Activated CD4-positive, alpha-beta memory T cell treated with anti-CD3 and anti-CD28 coated beads, Interleukin-2, amount 10 ng/mL, durations not matched to agents 7 days and 5 days (primary cell): ENCODE measurements at regions of chrX and their contacts with region 1.

Region 1: GRCh38 chrX:100674705-100675104 is 30.7 kb downstream of the SRPX2 start:
- DNase-seq: no peak
- H3K4me3 Mint-ChIP-seq: no peak overlapping the region
- H3K27ac Mint-ChIP-seq: no peak overlapping the region
- H3K4me1 Mint-ChIP-seq: peaks cover 7% of the 10 kb centered on the region
- H3K27me3 Mint-ChIP-seq: no peaks in the 10 kb centered on the region

Region 2: GRCh38 chrX:100409610-100410590 is 264.8 kb before region 1 on chrX and contains the start of gene PCDH19:
- CTCF ChIA-PET with region 1: no interaction called
- POLR2A ChIA-PET with region 1: no interaction called
- DNase-seq: peak; percentile 19
- H3K4me3 Mint-ChIP-seq: peak within 1 kb of the TSS; percentile 27
- H3K27ac Mint-ChIP-seq: no peak within 1 kb of the TSS
- H3K4me1 Mint-ChIP-seq: peaks cover 3% of the 10 kb centered on the region
- H3K27me3 Mint-ChIP-seq: peaks cover 61% of the 10 kb centered on the region
- total RNA-seq, gene PCDH19: not detected

Region 3: DNA sequence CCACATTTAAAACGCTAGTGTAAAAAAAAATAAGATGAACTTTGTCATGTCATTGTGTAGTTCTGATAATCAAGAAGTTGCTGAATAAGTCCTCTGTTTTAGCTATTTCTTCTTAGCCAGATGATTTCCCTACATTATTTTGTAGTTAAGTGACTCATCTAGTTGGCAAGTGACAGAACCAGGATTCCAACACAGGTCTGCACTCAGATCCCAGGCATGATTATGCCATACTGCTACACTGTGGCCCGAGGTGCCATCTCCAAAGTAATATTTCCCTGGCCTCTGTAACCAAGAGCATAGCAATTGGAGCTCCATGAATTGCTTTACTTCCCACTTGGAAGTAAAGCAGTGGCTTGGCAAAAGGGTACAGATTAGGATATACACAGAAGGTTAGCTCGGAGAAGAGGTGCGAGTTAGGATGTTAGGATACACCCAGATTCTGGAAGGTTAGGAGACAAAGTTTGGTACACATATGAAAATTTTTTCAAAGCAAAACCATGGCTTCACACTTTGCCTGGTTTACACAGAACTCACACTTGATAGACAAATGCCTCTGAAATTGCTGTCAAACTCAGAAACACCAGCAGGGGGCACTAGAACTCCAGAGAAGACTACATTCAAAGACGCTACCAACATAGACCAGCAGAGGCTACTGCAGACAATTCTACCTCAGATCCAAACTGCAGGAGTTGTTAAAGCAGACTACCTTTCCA is 10.7 kb after region 1 on chrX:
- CTCF ChIA-PET with region 1: interaction called, 11 read pairs
- POLR2A ChIA-PET with region 1: no interaction called
- DNase-seq: peak; percentile 60
- H3K4me3 Mint-ChIP-seq: no peak overlapping the region
- H3K27ac Mint-ChIP-seq: no peak overlapping the region
- H3K4me1 Mint-ChIP-seq: no peaks in the 10 kb centered on the region
- H3K27me3 Mint-ChIP-seq: peaks cover 14% of the 10 kb centered on the region

Region 4: DNA sequence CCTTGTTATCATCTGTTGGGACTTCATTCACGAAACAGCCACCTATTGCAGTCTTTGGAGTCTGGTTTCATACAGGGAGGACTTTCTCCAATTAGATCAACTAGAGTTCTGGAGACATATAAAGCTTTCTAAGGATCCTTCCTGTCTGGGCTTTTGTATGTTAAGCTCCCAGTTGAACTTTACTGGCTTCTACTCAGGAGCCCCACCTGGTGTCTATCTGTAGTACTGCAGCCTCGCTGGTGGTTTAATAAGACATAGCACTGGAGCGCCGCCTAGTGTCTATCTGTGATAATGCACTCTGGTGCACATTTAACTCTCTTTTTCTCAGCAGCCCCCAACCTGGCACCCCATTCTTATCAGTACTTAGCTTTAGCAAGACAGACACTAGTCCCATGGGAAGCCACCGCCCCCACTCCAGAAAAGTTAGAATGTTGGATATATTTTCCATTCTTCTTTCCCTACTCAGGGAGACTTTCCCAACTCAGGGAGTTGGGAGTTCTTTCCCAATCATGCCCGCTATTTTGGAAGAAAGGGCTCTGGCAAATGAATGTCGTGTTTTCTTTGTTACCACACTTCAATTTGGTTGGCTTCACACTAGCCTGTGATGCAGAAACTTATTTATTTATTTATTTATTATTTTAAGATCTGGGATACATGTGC is 94.1 kb after region 1 on chrX:
- CTCF ChIA-PET with region 1: interaction called, 24 read pairs
- POLR2A ChIA-PET with region 1: no interaction called
- DNase-seq: peak; percentile 83
- H3K4me3 Mint-ChIP-seq: no peak overlapping the region
- H3K27ac Mint-ChIP-seq: no peak overlapping the region
- H3K4me1 Mint-ChIP-seq: no peaks in the 10 kb centered on the region
- H3K27me3 Mint-ChIP-seq: peaks cover 32% of the 10 kb centered on the region

Region 5: DNA sequence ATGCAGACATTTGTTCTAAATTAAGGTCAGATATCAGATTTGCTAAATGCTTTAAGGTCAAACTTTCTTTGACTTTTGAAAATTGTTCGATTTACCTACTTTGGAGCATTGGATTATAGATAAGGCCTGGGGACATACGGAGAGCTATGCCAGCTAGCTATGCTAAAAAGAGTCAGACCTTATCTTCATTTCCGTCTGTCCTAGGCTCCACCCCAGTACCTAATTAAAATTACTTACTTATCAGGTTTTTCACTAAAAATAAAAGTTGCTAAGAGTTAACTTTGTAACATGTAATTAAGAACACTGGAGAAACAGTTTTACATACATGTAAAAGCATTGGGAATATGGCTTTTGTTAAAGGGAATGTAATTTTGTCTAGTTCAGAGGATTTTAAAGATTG is 396.9 kb after region 1 on chrX:
- CTCF ChIA-PET with region 1: no interaction called
- POLR2A ChIA-PET with region 1: no interaction called
- DNase-seq: no peak
- H3K4me3 Mint-ChIP-seq: no peak overlapping the region
- H3K27ac Mint-ChIP-seq: no peak overlapping the region
- H3K4me1 Mint-ChIP-seq: no peaks in the 10 kb centered on the region
- H3K27me3 Mint-ChIP-seq: no peaks in the 10 kb centered on the region